GM10248 (cell line): ENCODE measurements at regions of chr18 and their contacts with region 1.

Region 1: DNA sequence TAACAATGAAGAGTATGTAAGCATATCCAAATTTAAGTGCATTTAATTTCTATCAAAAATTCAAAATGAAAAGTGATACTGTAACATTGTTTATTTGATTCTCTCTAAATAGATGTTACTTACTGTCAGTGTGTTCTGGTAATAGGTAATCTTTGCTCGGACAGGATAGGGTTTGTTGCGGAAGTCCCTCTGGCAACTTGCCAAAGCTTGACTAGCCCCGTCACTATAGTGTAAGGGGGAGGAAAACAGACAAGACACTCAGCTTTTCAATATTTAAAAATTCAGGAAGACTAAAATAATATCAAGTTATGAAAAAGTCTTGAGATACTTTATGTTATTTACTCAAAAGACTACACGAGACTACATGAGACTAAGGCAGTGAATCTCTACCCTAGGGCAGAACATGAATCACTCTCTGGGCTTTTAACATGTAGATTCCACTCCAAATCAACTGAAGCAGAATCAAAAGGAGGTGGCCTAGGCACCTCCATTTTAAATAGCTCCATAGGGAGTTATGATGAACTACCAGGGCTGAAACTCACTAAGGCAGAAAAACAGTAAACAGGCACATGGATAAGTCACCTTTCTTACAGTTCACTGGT is 5.9 kb downstream of the LMAN1 start:
- DNase-seq: no peak
- CTCF ChIP-seq: no peak

Region 2: DNA sequence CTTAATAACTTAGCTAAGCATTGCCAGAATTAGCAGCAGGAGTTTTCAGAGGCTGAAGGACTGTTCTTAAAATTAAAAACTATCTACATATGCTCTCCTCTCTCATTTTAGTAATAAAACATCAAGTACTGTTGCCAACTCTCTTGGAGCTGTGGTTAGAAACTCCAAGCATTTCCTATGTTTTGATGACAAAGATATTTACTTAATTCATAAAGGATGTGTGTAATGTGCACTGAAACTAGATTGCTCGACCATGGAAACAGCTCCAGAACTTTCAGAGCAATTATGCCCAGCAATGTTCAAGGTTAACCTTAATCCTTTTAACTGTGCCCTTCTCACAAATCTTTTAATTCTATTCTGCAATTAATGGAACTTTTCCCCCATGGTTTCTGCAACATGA is 124.8 kb before region 1 on chr18:
- CTCF ChIA-PET with region 1: no interaction called
- POLR2A ChIA-PET with region 1: no interaction called
- DNase-seq: no peak
- CTCF ChIP-seq: no peak

Region 3: GRCh38 chr18:59340817-59341216 is 12.4 kb before region 1 on chr18:
- CTCF ChIA-PET with region 1: interaction called, 18 read pairs
- POLR2A ChIA-PET with region 1: no interaction called
- DNase-seq: no peak
- CTCF ChIP-seq: no peak